ENCODE measurements at regions of chr15 and their contacts with region 1.

Region 1: GRCh38 chr15:82540055-82540983 is at the start of gene RPS17:
- DNase-seq: peak; percentile 100
- H3K4me3 ChIP-seq: peak within 1 kb of the TSS; percentile 72 to 100
- H3K27ac ChIP-seq: peak within 1 kb of the TSS; percentile 84 to 95
- H3K4me1 ChIP-seq: peaks cover 8 to 19% of the 10 kb centered on the region in 2 experiments
- H3K27me3 ChIP-seq: no peaks in the 10 kb centered on the region
- CTCF ChIP-seq: peak; percentile 95
- EP300 ChIP-seq: peak in 1 of 2 experiments; percentile 43; a peak in 2 of 4 replicates
- RAD21 ChIP-seq: peak; percentile 40; the same call in 1 of the 2 replicates
- polyA plus RNA-seq, gene RPS17: 8,662 and 9,168 TPM in 2 replicates

Region 2: DNA sequence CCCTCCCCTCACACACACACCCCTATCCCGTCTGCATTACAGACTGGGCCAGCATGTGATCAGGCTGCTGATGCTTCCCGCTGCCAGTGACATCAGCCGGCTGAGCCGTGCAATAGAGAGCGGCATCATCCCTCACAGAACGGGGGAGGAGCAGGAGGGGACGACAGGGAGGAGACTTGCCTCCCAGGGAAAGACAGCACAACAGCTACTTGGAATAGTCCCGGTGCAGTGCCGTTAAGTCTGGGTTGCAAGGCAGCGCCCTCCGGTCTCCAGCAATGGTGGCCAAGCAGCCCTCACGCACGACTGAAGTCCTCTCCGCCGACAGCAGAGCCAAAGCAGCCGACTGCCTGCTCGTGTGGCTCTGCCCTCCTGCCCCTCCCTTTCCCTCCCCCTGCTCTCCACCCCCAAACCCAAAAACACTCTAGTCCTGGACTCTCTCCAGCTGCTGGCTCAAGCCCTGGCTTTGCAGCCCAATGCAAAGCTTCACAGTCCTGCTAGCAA is 31.5 kb after region 1 on chr15:
- CTCF ChIA-PET with region 1: interaction called, 15 read pairs
- POLR2A ChIA-PET with region 1: interaction called, 17 read pairs
- DNase-seq: peak; percentile 80
- H3K4me3 ChIP-seq: peak overlapping the region; percentile 41 to 47
- H3K27ac ChIP-seq: peak overlapping the region; percentile 10 to 56; a peak in 2 of 4 replicates
- H3K4me1 ChIP-seq: peaks cover 9 to 21% of the 10 kb centered on the region in 2 experiments; a peak in 2 of 4 replicates
- H3K27me3 ChIP-seq: no peaks in the 10 kb centered on the region
- CTCF ChIP-seq: no peak
- EP300 ChIP-seq: no peak
- RAD21 ChIP-seq: no peak

Region 3: GRCh38 chr15:82749951-82750830 is 209.9 kb after region 1 on chr15:
- CTCF ChIA-PET with region 1: interaction called, 17 read pairs
- POLR2A ChIA-PET with region 1: interaction called, 35 read pairs
- DNase-seq: peak; percentile 88
- H3K4me3 ChIP-seq: peak overlapping the region; percentile 83 to 84
- H3K27ac ChIP-seq: peak overlapping the region; percentile 79 to 93
- H3K4me1 ChIP-seq: peaks cover 3 to 6% of the 10 kb centered on the region in 2 experiments; a peak in 2 of 4 replicates
- H3K27me3 ChIP-seq: no peaks in the 10 kb centered on the region
- CTCF ChIP-seq: no peak
- EP300 ChIP-seq: peak in 1 of 2 experiments; percentile 80; a peak in 2 of 4 replicates
- RAD21 ChIP-seq: no peak

Region 4: GRCh38 chr15:83219026-83219425 is 678.7 kb after region 1 on chr15:
- CTCF ChIA-PET with region 1: no interaction called
- POLR2A ChIA-PET with region 1: no interaction called
- DNase-seq: no peak
- H3K4me3 ChIP-seq: no peak overlapping the region
- H3K27ac ChIP-seq: no peak overlapping the region
- H3K4me1 ChIP-seq: no peaks in the 10 kb centered on the region
- H3K27me3 ChIP-seq: no peaks in the 10 kb centered on the region
- CTCF ChIP-seq: no peak
- EP300 ChIP-seq: no peak
- RAD21 ChIP-seq: no peak